HEK293 (cell line): ENCODE measurements at regions of chr2 and their contacts with region 1.

Region 1: DNA sequence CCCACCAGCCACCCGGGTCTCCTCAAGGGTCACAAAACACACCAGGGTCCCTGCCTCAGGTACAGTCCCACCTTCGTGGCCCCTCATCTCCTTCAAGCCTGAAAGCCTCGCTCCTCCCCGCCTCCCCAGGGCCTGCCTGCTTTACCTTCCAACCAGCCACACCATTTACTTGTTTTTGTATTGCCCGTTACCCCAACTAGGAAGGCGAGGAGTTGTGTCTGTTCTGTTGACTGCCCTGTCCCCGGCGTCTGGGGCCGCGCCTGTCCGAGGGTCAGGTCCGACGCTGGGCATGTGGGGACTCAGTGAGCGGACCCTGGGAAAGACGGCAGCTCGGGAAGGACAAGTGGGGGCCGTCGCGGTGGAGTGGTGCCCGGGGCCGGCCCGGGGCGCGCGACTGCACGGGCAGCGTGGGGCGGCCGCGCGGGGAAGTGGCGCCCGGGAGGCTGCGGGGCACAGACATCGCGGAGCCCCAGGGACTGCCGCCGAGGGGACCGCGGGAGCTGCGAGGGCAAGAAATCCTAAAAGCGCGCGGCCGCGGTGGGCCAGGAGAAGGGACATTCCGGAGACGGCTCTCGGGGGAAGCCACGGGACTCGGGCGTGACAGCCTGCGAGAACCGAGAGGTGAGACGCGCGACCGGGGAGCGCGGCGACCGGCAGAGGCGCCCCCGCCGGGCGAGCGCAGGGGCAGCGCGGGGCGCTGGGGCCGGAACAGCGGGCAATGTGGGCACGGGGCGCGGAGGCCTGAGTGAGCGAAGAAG is 800 bp upstream of the GRHL1 start:
- H3K4me3 ChIP-seq: peak overlapping the region; percentile 53
- H3K27ac ChIP-seq: peak overlapping the region; percentile 61; the same call in 1 of the 2 replicates
- H3K4me1 ChIP-seq: peaks cover 16% of the 10 kb centered on the region
- CTCF ChIP-seq: no peak

Region 2: DNA sequence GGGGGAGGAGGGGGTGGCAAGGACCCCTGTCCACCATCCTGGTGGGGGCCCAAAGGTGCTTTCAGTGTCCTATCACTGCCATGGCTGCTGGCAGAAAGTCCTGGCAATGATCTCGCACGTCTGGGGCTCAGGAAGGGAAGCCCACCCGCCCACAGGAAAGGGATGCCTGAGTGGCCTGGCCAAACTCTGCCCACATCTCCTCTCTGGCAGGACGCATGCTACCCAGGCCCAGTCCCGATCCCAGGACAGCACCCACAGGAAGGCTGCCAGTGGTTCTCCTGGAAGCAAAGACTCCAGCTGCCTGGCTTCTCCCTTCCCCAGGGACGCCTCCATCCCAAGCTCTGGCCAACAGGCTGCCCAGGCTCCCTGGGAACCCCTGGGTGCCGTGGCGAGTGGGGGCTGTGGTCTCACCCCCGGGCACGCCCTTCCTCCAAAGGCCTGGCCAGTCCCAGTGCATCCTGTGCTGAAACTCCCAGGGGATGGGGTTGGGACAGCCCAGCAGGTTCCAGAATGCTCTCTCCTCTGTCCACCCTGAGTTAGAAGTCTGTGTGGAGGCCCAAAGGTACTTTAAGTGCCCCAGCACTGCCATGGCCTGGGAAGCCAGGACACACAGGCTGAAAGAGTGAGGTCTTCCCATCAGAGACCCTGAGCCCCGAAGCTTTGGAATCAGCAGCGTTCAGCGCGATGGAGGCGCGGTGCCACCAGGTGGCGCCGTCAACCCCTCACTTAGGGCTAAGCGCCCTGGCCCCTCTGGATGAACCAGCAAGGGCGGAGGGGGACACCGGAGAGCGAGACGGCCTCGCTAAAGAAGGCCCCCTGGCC is 137.2 kb before region 1 on chr2:
- CTCF ChIA-PET with region 1: interaction called, 15 read pairs
- POLR2A ChIA-PET with region 1: no interaction called
- H3K4me3 ChIP-seq: no peak overlapping the region
- H3K27ac ChIP-seq: no peak overlapping the region
- H3K4me1 ChIP-seq: no peaks in the 10 kb centered on the region
- CTCF ChIP-seq: peak; percentile 86

Region 3: DNA sequence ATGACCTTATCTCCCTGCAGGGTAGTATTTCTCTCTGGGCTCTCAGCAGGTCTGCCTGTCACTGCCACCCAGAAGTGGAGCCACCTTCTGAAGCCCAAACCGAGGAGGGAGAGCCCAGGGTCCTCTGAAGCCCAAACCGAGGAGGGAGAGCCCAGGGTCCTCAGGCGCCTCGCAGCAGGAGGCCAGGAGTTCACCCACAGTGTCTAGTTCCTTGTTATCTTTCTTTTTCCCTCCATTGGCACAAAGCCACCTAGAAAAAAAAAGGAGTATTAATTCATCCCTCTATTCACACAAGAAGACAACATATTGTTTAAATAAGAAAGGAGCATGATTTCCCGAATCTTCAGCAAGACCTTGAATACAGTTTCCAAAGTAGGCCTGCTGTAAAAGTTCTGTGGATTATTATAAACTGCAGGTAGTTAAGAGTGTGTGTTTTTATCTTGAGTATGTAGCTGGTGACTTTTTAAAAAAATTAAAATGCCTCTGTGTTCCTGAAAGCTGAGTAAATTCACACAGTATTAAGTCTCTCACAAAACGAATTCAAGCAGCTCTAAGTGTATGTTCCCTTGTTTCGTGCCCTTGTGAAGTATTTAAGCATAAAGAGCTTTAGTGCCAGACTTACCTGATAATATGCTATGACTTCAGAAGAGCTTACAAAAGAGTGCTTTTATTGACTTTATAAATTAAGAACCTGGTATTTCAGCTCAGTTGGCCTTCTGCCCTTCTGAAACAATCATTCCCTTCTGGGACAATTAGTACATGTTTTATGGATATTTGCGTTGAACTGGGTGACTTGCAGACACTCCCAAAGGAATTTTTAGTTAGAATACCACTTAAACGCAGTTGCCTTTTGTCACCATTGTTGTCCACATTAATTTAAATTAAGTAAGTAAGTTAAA is 10.9 kb before region 1 on chr2:
- CTCF ChIA-PET with region 1: no interaction called
- POLR2A ChIA-PET with region 1: no interaction called
- H3K4me3 ChIP-seq: no peak overlapping the region
- H3K27ac ChIP-seq: peak overlapping the region; percentile 54; the same call in 1 of the 2 replicates
- H3K4me1 ChIP-seq: peaks cover 16% of the 10 kb centered on the region
- CTCF ChIP-seq: no peak